ENCODE measurements at regions of chr4 and their contacts with region 1.

Region 1: DNA sequence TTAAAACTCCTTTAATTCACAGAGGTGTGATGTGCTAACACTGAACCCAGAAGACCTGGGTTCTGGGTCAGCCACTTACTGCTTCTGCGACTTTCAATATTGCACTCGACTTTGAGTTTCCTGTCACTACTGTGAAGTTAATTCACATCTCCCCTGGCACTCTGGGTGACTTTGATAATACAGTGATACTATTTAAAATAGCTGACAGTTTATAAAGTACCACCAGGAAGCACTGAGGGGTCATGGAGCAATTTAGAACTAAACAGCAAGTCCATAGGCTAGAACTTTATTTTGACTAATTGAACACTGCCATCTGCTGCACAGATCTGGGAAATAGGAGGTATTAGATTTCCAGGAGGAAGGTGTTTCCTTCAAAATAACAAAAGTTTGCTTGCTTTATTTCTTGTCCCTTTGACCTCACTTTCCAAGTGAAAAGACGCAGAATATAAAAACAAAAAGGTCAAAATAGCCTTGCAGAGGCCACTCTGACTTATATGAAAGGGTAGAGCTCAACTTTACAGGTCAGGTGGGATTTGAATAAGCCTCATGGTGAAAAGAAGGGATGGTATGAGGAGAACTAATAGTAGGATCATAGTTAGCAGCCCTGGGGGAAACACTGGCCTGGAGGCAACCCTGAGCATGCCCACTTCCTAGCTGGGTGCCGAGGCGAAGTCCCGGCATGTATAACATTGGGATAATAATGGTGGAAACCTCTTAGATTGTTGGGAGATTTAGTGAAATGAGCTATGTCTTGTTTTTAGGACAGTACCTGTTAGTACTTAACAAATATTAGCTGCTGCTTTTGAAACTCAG is 53.4 kb downstream of the ZNF518B start:
- DNase-seq: peak; percentile 31
- ATAC-seq: peak; percentile 84
- H3K4me3 ChIP-seq: no peak overlapping the region
- H3K27ac ChIP-seq: no peak overlapping the region
- H3K4me1 ChIP-seq: no peaks in the 10 kb centered on the region
- H3K27me3 ChIP-seq: no peaks in the 10 kb centered on the region; the same call in 1 of the 2 replicates
- CTCF ChIP-seq: peak; percentile 42 to 81 (median 58)
- POLR2A ChIP-seq: no peak
- RAD21 ChIP-seq: peak; percentile 76

Region 2: GRCh38 chr4:9762823-9763475 is 640.9 kb before region 1 on chr4:
- CTCF ChIA-PET with region 1: no interaction called
- POLR2A ChIA-PET with region 1: no interaction called
- RAD21 ChIA-PET with region 1: no interaction called
- intact Hi-C with region 1: loop called (anchors 5 kb)
- DNase-seq: peak; percentile 70
- ATAC-seq: peak; percentile 72
- H3K4me3 ChIP-seq: no peak overlapping the region
- H3K27ac ChIP-seq: no peak overlapping the region
- H3K4me1 ChIP-seq: no peaks in the 10 kb centered on the region
- H3K27me3 ChIP-seq: 0 out of 2 replicates have a peak, but pooled peaks cover 3% of the 10 kb centered on the region
- CTCF ChIP-seq: peak; percentile 66 to 89 (median 75)
- POLR2A ChIP-seq: no peak
- RAD21 ChIP-seq: peak; percentile 91

Region 3: GRCh38 chr4:10018818-10019461 is 384.9 kb before region 1 on chr4:
- CTCF ChIA-PET with region 1: no interaction called
- POLR2A ChIA-PET with region 1: no interaction called
- RAD21 ChIA-PET with region 1: no interaction called
- intact Hi-C with region 1: loop called (anchors 2 kb)
- DNase-seq: peak; percentile 88
- ATAC-seq: peak; percentile 98
- H3K4me3 ChIP-seq: peak overlapping the region; percentile 49 to 55
- H3K27ac ChIP-seq: peak overlapping the region; percentile 53
- H3K4me1 ChIP-seq: peaks cover 6 to 18% of the 10 kb centered on the region in 2 experiments; a peak in 3 of 4 replicates
- H3K27me3 ChIP-seq: no peaks in the 10 kb centered on the region
- CTCF ChIP-seq: peak in 2 of 3 experiments; percentile 99 to 100; a peak in 4 of 6 replicates
- POLR2A ChIP-seq: peak; percentile 62
- RAD21 ChIP-seq: no peak

Region 4: GRCh38 chr4:10157478-10158332 is 246.1 kb before region 1 on chr4:
- CTCF ChIA-PET with region 1: interaction called, 17 read pairs
- POLR2A ChIA-PET with region 1: no interaction called
- RAD21 ChIA-PET with region 1: no interaction called
- intact Hi-C with region 1: no loop called
- DNase-seq: peak; percentile 73
- ATAC-seq: peak; percentile 93
- H3K4me3 ChIP-seq: no peak overlapping the region
- H3K27ac ChIP-seq: no peak overlapping the region
- H3K4me1 ChIP-seq: peaks cover 3 to 8% of the 10 kb centered on the region in 2 experiments; a peak in 2 of 4 replicates
- H3K27me3 ChIP-seq: peaks cover 9% of the 10 kb centered on the region; the same call in 1 of the 2 replicates
- CTCF ChIP-seq: peak; percentile 83 to 87 (median 86)
- POLR2A ChIP-seq: no peak
- RAD21 ChIP-seq: peak; percentile 85

Region 5: DNA sequence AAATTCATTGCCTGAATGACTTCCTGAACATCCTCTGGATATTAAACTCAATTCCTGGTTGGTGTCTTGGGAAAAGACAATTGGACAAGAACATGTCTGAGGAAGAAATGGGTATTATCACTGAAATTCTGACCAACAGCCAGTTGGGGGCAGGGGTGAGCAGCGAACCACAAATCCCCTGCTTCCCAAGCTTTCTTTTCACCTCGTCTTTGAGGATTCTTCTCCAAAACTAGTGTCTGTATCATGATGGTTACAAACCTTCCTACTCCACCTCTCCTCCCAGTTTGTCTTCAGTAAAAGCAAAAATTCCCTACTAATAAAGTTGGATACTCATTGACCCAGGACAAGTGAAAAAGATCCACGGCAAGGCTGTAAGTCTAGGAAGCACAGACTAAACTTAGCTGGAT is 239.0 kb before region 1 on chr4:
- CTCF ChIA-PET with region 1: interaction called, 29 read pairs
- POLR2A ChIA-PET with region 1: no interaction called
- RAD21 ChIA-PET with region 1: no interaction called
- intact Hi-C with region 1: loop called (anchors 1 kb)
- DNase-seq: peak; percentile 44
- ATAC-seq: peak; percentile 79
- H3K4me3 ChIP-seq: no peak overlapping the region
- H3K27ac ChIP-seq: no peak overlapping the region
- H3K4me1 ChIP-seq: no peaks in the 10 kb centered on the region
- H3K27me3 ChIP-seq: no peaks in the 10 kb centered on the region
- CTCF ChIP-seq: peak; percentile 61 to 73 (median 71); a peak in 5 of 6 replicates
- POLR2A ChIP-seq: no peak
- RAD21 ChIP-seq: peak; percentile 70

Region 6: DNA sequence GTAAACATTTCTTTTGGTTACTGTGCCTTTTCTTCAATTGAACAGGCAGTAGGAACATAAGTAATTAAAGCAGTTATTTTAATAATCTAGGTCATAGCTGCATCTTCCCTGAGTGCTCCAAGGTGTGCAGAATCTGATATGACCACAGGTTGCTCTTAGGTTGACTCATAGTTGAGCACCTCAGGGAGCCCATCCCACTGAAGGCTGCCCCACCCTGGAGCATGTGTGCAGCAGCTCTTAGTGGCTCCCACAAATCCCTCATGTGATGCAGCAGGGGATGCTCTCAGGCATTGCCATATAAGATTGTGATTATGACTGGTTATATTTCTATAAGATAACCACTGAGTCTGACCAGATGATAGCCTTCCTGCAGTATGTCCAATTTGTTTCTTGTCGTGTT is 18.9 kb before region 1 on chr4:
- CTCF ChIA-PET with region 1: interaction called, 4 read pairs
- POLR2A ChIA-PET with region 1: no interaction called
- RAD21 ChIA-PET with region 1: no interaction called
- intact Hi-C with region 1: loop called (anchors 1 kb)
- DNase-seq: no peak
- ATAC-seq: no peak; the same call in 1 of the 2 replicates
- H3K4me3 ChIP-seq: no peak overlapping the region
- H3K27ac ChIP-seq: no peak overlapping the region
- H3K4me1 ChIP-seq: no peaks in the 10 kb centered on the region
- H3K27me3 ChIP-seq: peaks cover 22% of the 10 kb centered on the region
- CTCF ChIP-seq: no peak
- POLR2A ChIP-seq: no peak
- RAD21 ChIP-seq: no peak

Region 7: DNA sequence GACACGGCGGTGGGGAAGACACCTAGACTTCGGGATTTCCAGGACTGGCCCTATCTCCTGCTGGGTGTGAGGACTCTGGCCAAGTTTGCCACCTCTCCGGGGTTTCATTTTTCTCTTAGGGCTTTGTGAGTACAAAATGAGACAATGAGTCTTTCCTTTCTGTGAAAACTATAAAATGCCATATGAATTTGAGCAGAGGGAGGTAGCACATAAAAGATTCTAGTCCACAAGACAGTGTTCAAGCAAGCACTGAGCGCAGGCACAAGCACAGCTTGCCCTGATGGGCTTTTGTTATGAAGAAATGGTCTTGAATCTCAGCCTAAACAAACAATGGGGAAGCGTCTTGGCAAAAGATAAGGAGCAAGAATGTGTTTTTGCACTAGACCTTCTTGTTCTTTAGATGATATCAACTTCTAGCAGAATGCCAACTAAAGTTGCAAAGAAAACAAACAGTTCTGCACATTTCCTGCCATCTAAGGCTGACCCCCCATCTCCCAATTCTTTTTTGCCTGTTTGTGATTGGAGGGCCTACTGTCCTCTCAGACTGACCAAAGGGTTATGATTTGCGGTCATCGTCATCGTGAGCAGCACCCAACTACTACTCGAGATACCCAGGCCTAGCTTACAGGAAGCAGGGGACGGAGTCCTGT is 126.4 kb after region 1 on chr4:
- CTCF ChIA-PET with region 1: interaction called, 3 read pairs
- POLR2A ChIA-PET with region 1: no interaction called
- RAD21 ChIA-PET with region 1: no interaction called
- intact Hi-C with region 1: loop called (anchors 10 kb)
- DNase-seq: no peak
- ATAC-seq: no peak
- H3K4me3 ChIP-seq: peak overlapping the region in 1 of 2 experiments; percentile 7; a peak in 1 of 4 replicates
- H3K27ac ChIP-seq: peak overlapping the region; percentile 69
- H3K4me1 ChIP-seq: peaks cover 60 to 76% of the 10 kb centered on the region in 2 experiments
- H3K27me3 ChIP-seq: no peaks in the 10 kb centered on the region
- CTCF ChIP-seq: no peak
- POLR2A ChIP-seq: no peak
- RAD21 ChIP-seq: no peak

Region 8: GRCh38 chr4:11098461-11098860 is 694.6 kb after region 1 on chr4:
- CTCF ChIA-PET with region 1: no interaction called
- POLR2A ChIA-PET with region 1: no interaction called
- RAD21 ChIA-PET with region 1: no interaction called
- intact Hi-C with region 1: no loop called
- DNase-seq: no peak
- ATAC-seq: no peak
- H3K4me3 ChIP-seq: no peak overlapping the region
- H3K27ac ChIP-seq: no peak overlapping the region
- H3K4me1 ChIP-seq: no peaks in the 10 kb centered on the region
- H3K27me3 ChIP-seq: no peaks in the 10 kb centered on the region
- CTCF ChIP-seq: no peak
- POLR2A ChIP-seq: no peak
- RAD21 ChIP-seq: no peak

Measured in HCT116 (cell line).